ENCODE measurements at regions of chr13 and their contacts with region 1.

Region 1: GRCh38 chr13:34793301-34793700 is 148.8 kb upstream of the NBEA start:
- DNase-seq: no peak
- ATAC-seq: no peak
- H3K4me3 ChIP-seq: no peak overlapping the region
- H3K27ac ChIP-seq: no peak overlapping the region
- H3K4me1 ChIP-seq: no peaks in the 10 kb centered on the region
- H3K27me3 ChIP-seq: no peaks in the 10 kb centered on the region
- CTCF ChIP-seq: no peak

Region 2: DNA sequence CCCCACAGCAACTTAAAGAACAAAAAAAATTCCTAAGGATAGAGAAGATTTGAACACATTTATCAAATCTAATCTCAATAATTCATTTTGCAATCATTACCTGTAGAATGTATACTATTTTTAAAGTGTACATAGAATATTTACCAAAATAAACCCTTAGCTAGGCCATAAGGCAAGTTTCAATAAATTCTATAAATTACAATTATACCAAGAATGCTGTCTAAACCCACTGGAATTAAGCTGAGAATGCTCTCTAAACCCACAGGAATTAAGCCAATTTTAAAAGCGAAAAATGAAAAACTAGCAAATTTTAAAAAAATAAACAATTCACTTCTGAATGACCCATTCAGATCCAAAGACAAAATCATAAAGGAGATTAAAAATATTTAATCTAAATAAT is 391.6 kb before region 1 on chr13:
- intact Hi-C with region 1: no loop called
- DNase-seq: no peak
- ATAC-seq: no peak
- H3K4me3 ChIP-seq: no peak overlapping the region
- H3K27ac ChIP-seq: no peak overlapping the region
- H3K4me1 ChIP-seq: no peaks in the 10 kb centered on the region
- H3K27me3 ChIP-seq: no peaks in the 10 kb centered on the region
- CTCF ChIP-seq: no peak

Region 3: DNA sequence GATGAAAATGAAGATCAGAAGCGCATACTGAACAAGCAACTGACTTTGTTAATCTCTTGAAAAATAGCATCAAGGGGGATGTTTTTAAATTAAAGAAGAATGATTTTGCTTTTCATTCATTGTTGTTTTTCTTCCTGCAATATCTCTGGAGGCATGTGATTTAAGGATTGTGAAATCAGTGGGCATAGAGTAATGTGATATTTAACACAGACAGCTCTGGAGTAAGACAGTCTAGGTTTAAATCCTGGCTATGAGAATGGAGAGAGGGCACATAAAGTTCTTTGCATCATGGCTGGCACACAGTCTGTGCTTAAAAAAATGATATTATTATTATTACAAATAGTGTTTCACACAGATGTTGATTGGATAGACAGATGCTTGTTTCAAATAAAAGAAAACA is 94.3 kb before region 1 on chr13:
- intact Hi-C with region 1: loop called in 1 of 10 experiments (anchors 10 kb)
- DNase-seq: no peak
- ATAC-seq: peak in 1 of 8 donors; percentile 69
- H3K4me3 ChIP-seq: no peak overlapping the region
- H3K27ac ChIP-seq: no peak overlapping the region
- H3K4me1 ChIP-seq: peaks cover 0 to 13% (median 0%) of the 10 kb centered on the region in 9 donors
- H3K27me3 ChIP-seq: no peaks in the 10 kb centered on the region
- CTCF ChIP-seq: no peak

Region 4: DNA sequence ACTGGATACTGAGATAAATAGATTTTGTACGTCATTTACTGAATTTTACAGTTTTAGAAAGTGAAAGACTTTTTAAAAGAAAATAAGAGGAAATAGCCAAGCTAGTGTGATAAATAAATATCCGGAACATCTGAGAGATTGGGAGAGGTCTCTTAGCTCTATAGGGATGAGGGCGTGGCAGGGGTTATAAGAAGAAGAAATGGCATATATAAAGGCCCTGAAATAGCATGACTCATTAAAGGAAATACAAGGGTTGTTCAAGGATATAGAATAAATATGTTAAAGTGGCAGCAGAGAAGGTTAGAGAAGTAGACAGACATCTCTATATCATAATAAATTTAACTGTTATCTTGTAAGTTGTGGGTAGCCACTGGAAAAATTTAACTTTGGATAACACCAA is 538.8 kb after region 1 on chr13:
- intact Hi-C with region 1: no loop called
- DNase-seq: no peak
- ATAC-seq: no peak
- H3K4me3 ChIP-seq: no peak overlapping the region
- H3K27ac ChIP-seq: no peak overlapping the region
- H3K4me1 ChIP-seq: no peaks in the 10 kb centered on the region
- H3K27me3 ChIP-seq: no peaks in the 10 kb centered on the region
- CTCF ChIP-seq: no peak